ENCODE measurements at regions of chr11 and their contacts with region 1.

Region 1: DNA sequence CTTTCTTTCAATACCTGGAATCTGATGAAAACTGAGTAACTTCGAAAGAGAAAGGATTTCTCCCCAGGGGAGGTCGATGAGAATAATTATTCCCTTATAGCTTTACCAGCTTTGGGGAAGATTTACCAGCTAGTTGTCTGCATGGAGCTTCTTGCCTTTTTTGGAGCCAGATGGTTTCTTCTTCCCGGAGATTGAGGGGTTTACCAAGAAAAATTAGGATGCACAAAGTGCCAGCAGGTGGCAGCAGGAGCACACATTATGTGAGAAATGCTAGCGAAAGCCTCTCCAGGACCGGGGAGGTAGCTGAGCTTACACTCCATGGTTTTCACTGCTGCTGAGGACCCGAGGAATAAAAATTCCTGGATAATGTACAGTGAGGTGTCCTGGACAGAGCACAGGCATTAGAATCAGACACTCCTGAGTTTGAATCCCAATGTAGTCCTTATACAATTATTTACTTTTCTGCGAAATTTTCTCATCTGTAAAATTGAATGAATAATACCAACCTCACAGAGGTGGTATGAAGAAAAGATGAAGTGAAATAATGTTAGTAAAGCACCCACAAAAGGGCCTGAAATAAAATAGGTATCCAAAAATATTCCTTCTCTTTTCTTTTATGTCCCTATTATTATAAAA is 46.0 kb upstream of the PARVA start:
- DNase-seq: peak; percentile 68
- H3K4me3 ChIP-seq: no peak overlapping the region
- H3K27ac ChIP-seq: no peak overlapping the region
- H3K4me1 ChIP-seq: no peaks in the 10 kb centered on the region
- CTCF ChIP-seq: peak; percentile 85

Region 2: DNA sequence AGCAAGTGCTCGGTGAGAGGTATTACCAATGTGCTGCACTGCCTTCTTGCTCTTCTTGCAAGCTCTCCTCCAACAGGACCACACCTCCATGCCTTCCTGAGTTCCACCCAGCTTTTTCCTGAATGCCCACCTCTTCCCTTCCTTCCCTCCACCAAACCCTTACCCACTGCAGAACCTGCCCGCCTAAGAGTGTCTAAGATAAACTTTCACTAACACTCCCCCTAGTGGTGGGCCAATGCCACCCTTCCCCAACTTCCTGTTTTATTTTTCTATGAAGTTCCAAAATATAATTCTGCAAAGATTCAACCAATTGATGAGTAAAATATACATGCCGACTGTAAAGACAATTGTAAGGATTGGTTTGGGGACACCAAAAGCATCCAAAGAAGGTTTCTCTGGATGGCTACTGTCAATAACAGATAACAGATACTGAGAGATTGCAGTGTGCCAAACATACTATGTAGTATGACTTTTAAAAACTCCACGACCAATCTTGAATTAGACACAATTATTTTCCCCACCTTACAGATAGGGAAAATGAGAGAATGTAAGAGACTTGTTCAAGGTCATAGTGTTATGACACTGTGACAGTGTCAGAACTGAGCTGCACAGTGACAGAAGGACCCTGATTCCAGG is 907.6 kb after region 1 on chr11:
- CTCF ChIA-PET with region 1: no interaction called
- POLR2A ChIA-PET with region 1: no interaction called
- intact Hi-C with region 1: loop called (anchors 10 kb)
- DNase-seq: peak; percentile 54
- H3K4me3 ChIP-seq: no peak overlapping the region
- H3K27ac ChIP-seq: no peak overlapping the region
- H3K4me1 ChIP-seq: no peaks in the 10 kb centered on the region
- CTCF ChIP-seq: peak; percentile 94